ENCODE measurements at regions of chr1 and their contacts with region 1.

Region 1: DNA sequence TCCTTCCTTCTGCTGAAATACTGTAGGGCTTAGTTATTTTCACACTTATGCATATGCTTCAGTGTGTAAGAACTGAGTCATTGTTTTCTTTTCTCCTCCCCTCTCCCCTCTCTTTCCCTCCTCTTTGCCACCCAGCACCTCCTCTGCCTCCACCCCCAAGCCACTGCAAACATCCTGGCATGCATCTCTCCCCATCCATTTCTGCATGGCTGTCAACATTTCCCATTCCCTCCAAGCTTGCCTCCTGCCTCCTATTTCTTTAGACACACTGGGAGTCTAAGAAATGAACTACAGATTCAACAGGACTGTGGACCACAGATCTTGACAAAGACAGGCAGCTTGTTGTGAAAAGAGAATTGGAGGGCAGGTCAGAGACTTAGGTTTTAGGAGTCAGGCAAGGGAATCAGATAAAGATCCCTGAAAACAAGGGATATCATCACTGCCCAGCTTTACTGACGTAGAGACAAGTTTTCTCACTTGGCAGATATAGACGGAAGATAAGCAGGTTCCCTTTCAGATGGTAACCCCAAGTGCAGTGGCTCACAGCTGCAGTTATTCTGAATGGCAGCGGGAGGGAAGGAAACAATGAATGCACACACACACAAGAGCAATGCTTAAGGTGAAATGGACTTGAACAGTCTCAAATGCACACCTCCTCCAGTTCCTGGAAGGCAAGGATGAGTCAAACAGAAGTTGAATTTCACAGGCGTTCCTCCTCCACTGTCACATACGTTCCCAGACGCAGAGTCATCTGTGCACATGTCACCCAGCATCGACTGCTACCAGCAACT is 56.1 kb downstream of the HIVEP3 start:
- DNase-seq: peak; percentile 51
- H3K4me3 Mint-ChIP-seq: peak overlapping the region; percentile 50
- H3K27ac Mint-ChIP-seq: peak overlapping the region; percentile 90
- H3K4me1 Mint-ChIP-seq: peaks cover 47% of the 10 kb centered on the region
- H3K27me3 Mint-ChIP-seq: no peaks in the 10 kb centered on the region

Region 2: GRCh38 chr1:41662061-41662764 is 200.4 kb before region 1 on chr1:
- intact Hi-C with region 1: loop called (anchors 2 kb)
- DNase-seq: peak; percentile 73
- H3K4me3 Mint-ChIP-seq: peak overlapping the region; percentile 70
- H3K27ac Mint-ChIP-seq: peak overlapping the region; percentile 65
- H3K4me1 Mint-ChIP-seq: peaks cover 83% of the 10 kb centered on the region
- H3K27me3 Mint-ChIP-seq: no peaks in the 10 kb centered on the region

Region 3: GRCh38 chr1:41739061-41739955 is 123.3 kb before region 1 on chr1:
- intact Hi-C with region 1: loop called (anchors 1 kb)
- DNase-seq: peak; percentile 74
- H3K4me3 Mint-ChIP-seq: peak overlapping the region; percentile 66
- H3K27ac Mint-ChIP-seq: peak overlapping the region; percentile 98
- H3K4me1 Mint-ChIP-seq: peaks cover 93% of the 10 kb centered on the region
- H3K27me3 Mint-ChIP-seq: peaks cover 2% of the 10 kb centered on the region

Region 4: GRCh38 chr1:41783189-41783639 is 79.4 kb before region 1 on chr1:
- intact Hi-C with region 1: loop called (anchors 1 kb)
- DNase-seq: no peak
- H3K4me3 Mint-ChIP-seq: peak overlapping the region; percentile 21
- H3K27ac Mint-ChIP-seq: peak overlapping the region; percentile 35
- H3K4me1 Mint-ChIP-seq: peaks cover 21% of the 10 kb centered on the region
- H3K27me3 Mint-ChIP-seq: no peaks in the 10 kb centered on the region

Region 5: GRCh38 chr1:41850029-41850428 is 12.6 kb before region 1 on chr1:
- intact Hi-C with region 1: loop called (anchors 1 kb)
- DNase-seq: peak; percentile 6
- H3K4me3 Mint-ChIP-seq: no peak overlapping the region
- H3K27ac Mint-ChIP-seq: peak overlapping the region; percentile 5
- H3K4me1 Mint-ChIP-seq: peaks cover 46% of the 10 kb centered on the region
- H3K27me3 Mint-ChIP-seq: no peaks in the 10 kb centered on the region

Region 6: GRCh38 chr1:41882068-41882477 is 19.5 kb after region 1 on chr1:
- intact Hi-C with region 1: no loop called
- DNase-seq: no peak
- H3K4me3 Mint-ChIP-seq: no peak overlapping the region
- H3K27ac Mint-ChIP-seq: peak overlapping the region; percentile 46
- H3K4me1 Mint-ChIP-seq: peaks cover 33% of the 10 kb centered on the region
- H3K27me3 Mint-ChIP-seq: no peaks in the 10 kb centered on the region

Region 7: GRCh38 chr1:41919764-41920397 is 57.3 kb after region 1 on chr1:
- intact Hi-C with region 1: loop called (anchors 2 kb)
- DNase-seq: peak; percentile 83
- H3K4me3 Mint-ChIP-seq: peak overlapping the region; percentile 86
- H3K27ac Mint-ChIP-seq: peak overlapping the region; percentile 95
- H3K4me1 Mint-ChIP-seq: peaks cover 59% of the 10 kb centered on the region
- H3K27me3 Mint-ChIP-seq: peaks cover 4% of the 10 kb centered on the region

Region 8: DNA sequence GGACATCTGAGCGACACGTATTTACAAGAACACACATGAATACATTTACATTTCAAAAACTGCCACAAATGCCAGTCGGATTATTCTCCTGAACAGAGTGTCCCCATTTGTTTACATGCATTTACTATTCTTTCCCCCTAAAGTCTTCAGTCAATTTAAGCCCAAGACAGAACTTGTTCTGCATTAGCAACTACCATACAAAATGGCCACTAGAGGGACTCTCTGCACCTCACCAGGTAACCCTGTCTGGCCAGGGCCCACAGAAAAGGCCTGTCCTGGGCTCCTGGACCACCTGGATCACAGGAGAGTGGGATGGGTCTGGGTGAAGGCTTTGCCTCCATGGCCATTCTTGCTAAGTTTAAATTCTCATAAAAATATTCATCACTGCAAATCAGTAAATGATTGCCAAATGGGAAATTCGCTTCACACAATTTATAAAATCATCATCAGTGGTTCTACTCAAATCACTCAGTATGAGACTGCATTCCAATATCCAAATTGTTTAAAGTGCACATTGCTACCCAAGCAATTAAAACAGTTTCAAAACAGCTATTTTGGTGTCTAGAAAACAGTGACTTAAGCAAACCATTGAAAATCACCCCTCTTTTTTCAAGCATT is 314.4 kb after region 1 on chr1:
- intact Hi-C with region 1: no loop called
- DNase-seq: no peak
- H3K4me3 Mint-ChIP-seq: no peak overlapping the region
- H3K27ac Mint-ChIP-seq: no peak overlapping the region
- H3K4me1 Mint-ChIP-seq: no peaks in the 10 kb centered on the region
- H3K27me3 Mint-ChIP-seq: no peaks in the 10 kb centered on the region

Measured in activated T-helper 1 cell treated with anti-CD3 and anti-CD28 coated beads, Interleukin-12 subunit alpha, Interleukin-12 subunit beta, Interleukin-2, Interleukin-4 antibody, amounts not matched to agents 30 ng/mL and 10 ng/mL and 1 ng/mL, durations not matched to agents 14 hours and 24 hours and 36 hours (primary cell).